IMR-90 (cell line): ENCODE measurements at regions of chr7 and their contacts with region 1.

Region 1: DNA sequence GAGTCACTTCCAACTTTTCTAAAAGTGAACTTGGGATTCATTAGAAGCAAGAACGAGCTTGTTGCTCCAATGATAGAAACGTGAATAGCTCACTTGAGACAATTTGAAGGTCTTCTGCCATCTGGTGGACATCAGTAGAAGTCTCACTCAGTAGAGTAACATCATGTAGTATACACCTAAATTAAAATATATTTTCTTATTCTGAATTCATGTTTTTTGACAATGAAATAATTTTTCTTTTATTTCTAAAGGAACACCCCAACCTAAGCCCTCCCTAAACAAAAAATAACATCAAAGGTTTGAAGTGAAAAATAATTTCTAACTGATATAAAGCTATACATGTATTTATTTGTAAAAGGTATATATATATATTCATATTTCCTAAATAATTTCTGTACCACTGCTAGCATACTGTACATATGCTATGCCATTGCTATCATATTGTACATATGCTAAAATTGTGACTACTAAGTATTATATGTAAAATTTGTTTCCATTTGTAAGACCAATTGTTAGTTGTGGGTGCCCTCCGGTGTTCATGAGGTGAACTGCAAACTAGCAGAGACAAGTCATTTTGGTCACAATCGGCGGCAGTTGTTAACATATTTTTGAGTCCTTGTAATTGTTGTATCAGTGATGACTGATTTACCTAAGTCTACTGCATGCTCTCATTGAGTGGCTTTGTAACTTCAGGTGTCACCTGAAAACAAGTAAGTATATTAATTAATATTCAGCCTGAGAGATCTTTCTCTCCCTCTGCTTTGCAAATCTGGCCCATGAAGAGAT is 121.9 kb downstream of the PTPRZ1 start:
- DNase-seq: peak; percentile 81
- ATAC-seq: peak; percentile 97
- H3K4me3 ChIP-seq: no peak overlapping the region
- H3K27ac ChIP-seq: no peak overlapping the region
- H3K4me1 ChIP-seq: no peaks in the 10 kb centered on the region
- H3K27me3 ChIP-seq: no peaks in the 10 kb centered on the region
- CTCF ChIP-seq: peak; percentile 75
- POLR2A ChIP-seq: no peak
- RAD21 ChIP-seq: peak; percentile 80

Region 2: DNA sequence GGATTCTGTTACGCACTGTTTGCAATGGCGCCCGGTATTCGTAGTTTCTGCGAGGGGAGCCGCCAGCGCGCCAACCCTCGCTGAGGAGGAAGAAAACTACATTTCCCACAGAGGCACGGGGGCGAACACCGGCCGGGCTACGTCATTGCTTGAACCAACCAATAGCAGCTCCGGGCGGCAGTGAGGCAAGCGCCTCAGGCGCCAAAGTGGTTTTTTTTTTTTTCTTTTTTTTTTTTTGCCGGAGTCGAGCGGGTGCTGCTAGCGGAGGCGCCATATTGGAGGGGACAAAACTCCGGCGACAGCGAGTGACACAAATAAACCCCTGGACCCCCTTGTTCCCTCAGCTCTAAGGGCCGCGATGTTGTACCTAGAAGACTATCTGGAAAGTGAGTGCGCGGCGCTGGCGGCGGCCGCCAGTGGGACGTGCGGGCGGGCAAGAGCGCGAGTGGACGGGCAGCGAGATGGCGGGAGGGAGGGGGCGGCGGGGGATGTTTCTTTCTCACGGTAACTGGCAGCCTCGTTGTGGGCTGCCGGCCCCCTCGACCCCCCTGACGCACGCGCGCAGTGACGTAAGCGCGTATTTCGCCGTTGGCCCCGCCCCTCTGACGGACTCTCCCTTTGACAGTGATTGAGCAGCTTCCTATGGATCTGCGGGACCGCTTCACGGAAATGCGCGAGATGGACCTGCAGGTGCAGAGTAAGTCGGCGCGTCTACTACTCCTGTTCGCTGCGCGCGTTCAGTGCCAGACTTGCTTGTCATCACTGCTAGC is 1044.1 kb before region 1 on chr7 and contains the start of gene ING3:
- CTCF ChIA-PET with region 1: no interaction called
- POLR2A ChIA-PET with region 1: no interaction called
- dilution Hi-C with region 1: no loop called
- in situ Hi-C with region 1: no loop called
- intact Hi-C with region 1: loop called (anchors 10 kb)
- DNase-seq: peak; percentile 97
- ATAC-seq: peak; percentile 97
- H3K4me3 ChIP-seq: peak within 1 kb of the TSS; percentile 89
- H3K27ac ChIP-seq: peak within 1 kb of the TSS; percentile 99
- H3K4me1 ChIP-seq: peaks cover 2% of the 10 kb centered on the region; the same call in 1 of the 2 replicates
- H3K27me3 ChIP-seq: 0 out of 2 replicates have a peak, but pooled peaks cover 2% of the 10 kb centered on the region
- CTCF ChIP-seq: no peak
- POLR2A ChIP-seq: peak; percentile 89
- RAD21 ChIP-seq: no peak
- total RNA-seq, gene ING3: 11.3 and 14.4 TPM in 2 replicates

Region 3: GRCh38 chr7:121366852-121367431 is 627.9 kb before region 1 on chr7:
- CTCF ChIA-PET with region 1: interaction called, 3 read pairs
- POLR2A ChIA-PET with region 1: interaction called, 4 read pairs
- dilution Hi-C with region 1: no loop called
- in situ Hi-C with region 1: loop called (anchors 10 kb)
- intact Hi-C with region 1: loop called (anchors 2 kb)
- DNase-seq: peak; percentile 48
- ATAC-seq: no peak; the same call in 1 of the 2 replicates
- H3K4me3 ChIP-seq: no peak overlapping the region
- H3K27ac ChIP-seq: no peak overlapping the region
- H3K4me1 ChIP-seq: peaks cover 5% of the 10 kb centered on the region
- H3K27me3 ChIP-seq: no peaks in the 10 kb centered on the region
- CTCF ChIP-seq: peak; percentile 83
- POLR2A ChIP-seq: no peak
- RAD21 ChIP-seq: peak; percentile 74

Region 4: DNA sequence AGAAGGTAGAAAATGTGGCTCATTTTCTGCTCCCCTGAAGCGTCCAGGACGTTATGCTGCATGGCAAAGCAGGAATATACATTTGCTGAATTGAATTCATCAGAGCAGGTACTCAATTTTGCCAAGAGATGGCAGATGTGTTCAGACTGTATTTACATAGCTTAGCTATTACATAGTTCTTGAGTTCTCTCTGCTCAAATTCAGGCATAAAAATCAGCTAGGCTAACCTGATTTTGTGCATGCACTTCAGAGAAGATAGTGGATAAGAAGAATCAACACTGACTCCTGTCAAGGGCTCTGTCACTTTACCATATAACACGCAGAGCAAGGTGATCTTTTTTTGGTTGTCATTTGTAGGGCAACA is 389.5 kb before region 1 on chr7:
- CTCF ChIA-PET with region 1: interaction called, 6 read pairs
- POLR2A ChIA-PET with region 1: no interaction called
- dilution Hi-C with region 1: no loop called
- in situ Hi-C with region 1: no loop called
- intact Hi-C with region 1: loop called (anchors 5 kb)
- DNase-seq: peak; percentile 6
- ATAC-seq: peak; percentile 35; the same call in 1 of the 2 replicates
- H3K4me3 ChIP-seq: no peak overlapping the region
- H3K27ac ChIP-seq: no peak overlapping the region
- H3K4me1 ChIP-seq: no peaks in the 10 kb centered on the region
- H3K27me3 ChIP-seq: peaks cover 4% of the 10 kb centered on the region
- CTCF ChIP-seq: peak; percentile 21; the same call in 1 of the 2 replicates
- POLR2A ChIP-seq: no peak
- RAD21 ChIP-seq: no peak

Region 5: DNA sequence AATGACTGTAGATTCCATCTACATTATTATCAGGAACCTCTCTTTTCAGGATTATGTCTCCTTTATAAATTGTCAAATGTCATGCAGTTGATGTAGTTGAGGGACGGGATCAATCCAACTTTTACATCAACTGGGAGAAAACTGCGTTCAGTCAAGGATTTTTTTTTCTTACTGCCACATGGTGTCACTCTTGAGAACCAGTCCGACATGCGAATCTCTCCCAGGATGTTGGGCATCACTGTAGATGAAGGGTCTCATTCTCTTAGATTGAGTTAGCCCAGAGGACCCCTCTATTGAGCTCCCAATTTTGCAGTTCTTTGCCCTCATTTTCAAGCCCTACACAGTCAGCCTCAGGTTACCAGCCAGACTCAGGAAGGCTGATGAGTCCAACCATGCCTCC is 242.1 kb before region 1 on chr7:
- CTCF ChIA-PET with region 1: interaction called, 14 read pairs
- POLR2A ChIA-PET with region 1: no interaction called
- dilution Hi-C with region 1: no loop called
- in situ Hi-C with region 1: loop called (anchors 10 kb)
- intact Hi-C with region 1: loop called (anchors 1 kb)
- DNase-seq: peak; percentile 13
- ATAC-seq: no peak
- H3K4me3 ChIP-seq: no peak overlapping the region
- H3K27ac ChIP-seq: no peak overlapping the region
- H3K4me1 ChIP-seq: no peaks in the 10 kb centered on the region
- H3K27me3 ChIP-seq: no peaks in the 10 kb centered on the region
- CTCF ChIP-seq: peak; percentile 41
- POLR2A ChIP-seq: no peak
- RAD21 ChIP-seq: peak; percentile 48

Region 6: DNA sequence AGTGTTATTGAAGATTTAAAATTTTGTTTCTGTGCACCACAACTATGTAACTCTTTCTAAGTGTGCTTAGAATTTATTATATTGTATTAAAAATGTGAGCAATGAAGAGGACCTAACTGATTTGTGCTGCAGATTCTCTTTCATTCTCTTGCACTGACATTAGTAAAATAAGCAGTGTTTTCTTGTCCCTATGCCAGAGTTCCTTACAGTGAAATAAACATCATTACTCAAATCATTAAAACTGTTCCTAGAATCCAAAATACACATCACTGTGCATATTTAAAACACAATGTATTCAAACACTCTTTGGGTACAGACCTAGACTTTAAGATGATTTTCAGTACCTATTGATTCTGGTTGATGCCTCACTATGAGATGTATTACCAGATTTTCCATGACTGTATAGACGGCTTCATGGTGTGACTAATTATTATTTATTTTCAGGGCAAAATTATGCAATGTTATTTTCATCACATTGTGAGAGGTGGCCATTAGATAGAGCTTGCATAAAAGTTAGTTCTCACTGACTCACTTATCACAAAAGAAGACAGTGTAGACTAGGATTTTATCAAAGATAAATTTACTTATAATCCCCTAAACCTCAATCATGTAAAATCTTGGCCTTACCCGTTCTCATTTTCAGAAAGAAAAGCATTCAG is 28.4 kb before region 1 on chr7:
- CTCF ChIA-PET with region 1: interaction called, 10 read pairs
- POLR2A ChIA-PET with region 1: no interaction called
- dilution Hi-C with region 1: no loop called
- in situ Hi-C with region 1: no loop called
- intact Hi-C with region 1: no loop called
- DNase-seq: no peak
- ATAC-seq: no peak
- H3K4me3 ChIP-seq: no peak overlapping the region
- H3K27ac ChIP-seq: no peak overlapping the region
- H3K4me1 ChIP-seq: no peaks in the 10 kb centered on the region
- H3K27me3 ChIP-seq: no peaks in the 10 kb centered on the region
- CTCF ChIP-seq: no peak
- POLR2A ChIP-seq: no peak
- RAD21 ChIP-seq: no peak